Activated naive CD4-positive, alpha-beta T cell treated with anti-CD3 and anti-CD28 coated beads for 36 hours (primary cell): ENCODE measurements at regions of chrX and their contacts with region 1.

Region 1: DNA sequence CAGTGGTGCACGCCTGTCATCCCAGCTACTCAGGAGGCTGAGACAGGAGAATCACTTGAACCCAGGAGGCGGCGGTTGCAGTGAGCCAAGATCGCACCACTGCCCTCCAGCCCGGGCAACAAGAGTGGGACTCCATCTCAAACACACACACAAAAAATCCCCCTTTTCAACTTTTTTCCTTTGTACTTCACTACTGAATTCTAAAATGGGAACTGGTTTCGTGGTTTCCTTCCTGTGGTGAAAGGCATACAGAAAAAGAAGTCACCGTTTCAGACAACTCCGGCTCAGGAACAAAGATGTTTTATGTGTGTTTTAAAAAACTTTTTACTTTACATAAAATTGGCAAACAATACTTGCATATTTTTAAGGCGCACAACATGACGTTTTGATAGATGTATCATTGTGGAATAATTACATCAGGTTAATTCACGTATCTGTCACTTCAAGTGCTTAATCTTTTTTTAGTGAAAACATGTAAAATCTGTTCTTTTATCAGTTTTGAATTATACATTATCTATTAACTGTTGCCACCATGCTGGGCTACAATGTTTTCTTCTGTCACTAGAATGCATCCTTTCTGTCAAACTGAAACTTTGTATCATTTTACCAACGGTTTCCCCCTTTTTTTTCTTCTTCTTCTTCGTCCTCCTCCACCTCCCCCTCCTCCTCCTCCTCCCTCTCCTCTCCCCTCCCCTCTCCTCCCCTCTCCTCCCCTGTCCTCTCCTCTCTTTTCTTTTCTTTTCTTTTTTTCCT is 186.0 kb downstream of the CRLF2 start:
- DNase-seq: no peak
- H3K4me3 Mint-ChIP-seq: peak overlapping the region; percentile 56
- H3K27ac Mint-ChIP-seq: no peak overlapping the region
- H3K4me1 Mint-ChIP-seq: peaks cover 18% of the 10 kb centered on the region
- H3K27me3 Mint-ChIP-seq: peaks cover 6% of the 10 kb centered on the region

Region 2: GRCh38 chrX:1159548-1159947 is 133.1 kb after region 1 on chrX:
- CTCF ChIA-PET with region 1: no interaction called
- intact Hi-C with region 1: loop called (anchors 5 kb)
- DNase-seq: no peak
- H3K4me3 Mint-ChIP-seq: no peak overlapping the region
- H3K27ac Mint-ChIP-seq: no peak overlapping the region
- H3K4me1 Mint-ChIP-seq: peaks cover 2% of the 10 kb centered on the region
- H3K27me3 Mint-ChIP-seq: peaks cover 1% of the 10 kb centered on the region